Ascending aorta (tissue), 2 donors: ENCODE measurements at regions of chr7 and their contacts with region 1.

Region 1: GRCh38 chr7:150368096-150368883 is at the start of gene REPIN1:
- DNase-seq: peak; percentile 75 to 96
- H3K4me3 ChIP-seq: peak within 1 kb of the TSS; percentile 96 to 97
- H3K27ac ChIP-seq: peak within 1 kb of the TSS; percentile 90
- H3K4me1 ChIP-seq: peaks cover 8 to 11% of the 10 kb centered on the region in 2 donors
- H3K27me3 ChIP-seq: no peaks in the 10 kb centered on the region
- CTCF ChIP-seq: no peak
- total RNA-seq, gene REPIN1: 123 TPM

Region 2: GRCh38 chr7:149624419-149625339 is 743.6 kb before region 1 on chr7:
- intact Hi-C with region 1: loop called (anchors 5 kb)
- DNase-seq: peak; percentile 77 to 97
- H3K4me3 ChIP-seq: peak overlapping the region; percentile 91 to 98
- H3K27ac ChIP-seq: peak overlapping the region; percentile 84 to 90
- H3K4me1 ChIP-seq: peaks cover 0 to 7% of the 10 kb centered on the region in 2 donors
- H3K27me3 ChIP-seq: no peaks in the 10 kb centered on the region
- CTCF ChIP-seq: peak; percentile 92 to 98 (median 93)

Region 3: DNA sequence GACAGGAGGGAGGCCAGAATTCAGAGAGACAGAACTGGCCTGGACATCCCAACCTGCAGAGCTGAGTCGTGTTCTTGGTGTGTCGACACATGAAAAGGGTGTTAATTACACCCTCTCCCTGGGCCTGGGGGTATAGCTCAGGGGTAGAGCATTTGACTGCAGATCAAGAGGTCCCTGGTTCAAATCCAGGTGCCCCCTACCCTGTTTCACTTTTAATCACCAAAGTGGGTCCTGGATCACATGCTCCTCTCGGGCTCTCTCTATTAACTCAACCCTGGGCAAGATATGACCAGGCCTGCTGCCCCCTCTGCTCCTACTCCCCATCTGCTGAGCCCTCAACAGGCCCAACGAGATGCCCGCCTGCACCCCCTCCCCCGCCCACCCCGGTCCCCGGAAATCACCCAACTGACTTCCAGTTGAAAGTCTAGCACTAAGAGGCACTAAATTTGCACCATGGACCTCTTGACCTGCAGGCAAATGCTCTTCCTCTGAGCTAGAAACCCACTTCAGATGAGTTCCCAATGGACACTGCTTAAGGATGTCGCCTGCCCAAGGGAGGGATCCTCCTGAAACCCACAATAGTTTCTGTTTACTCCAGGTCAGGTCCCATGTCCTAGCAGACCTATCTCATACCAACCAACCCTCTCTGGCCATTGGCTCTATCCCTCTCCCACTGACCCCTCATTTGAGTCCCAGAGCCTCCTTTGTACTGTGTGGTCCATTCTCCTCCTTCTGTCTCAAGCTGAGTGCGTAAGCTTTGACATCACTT is 732.5 kb before region 1 on chr7:
- intact Hi-C with region 1: no loop called
- DNase-seq: no peak
- H3K4me3 ChIP-seq: no peak overlapping the region
- H3K27ac ChIP-seq: no peak overlapping the region
- H3K4me1 ChIP-seq: no peaks in the 10 kb centered on the region
- H3K27me3 ChIP-seq: no peaks in the 10 kb centered on the region
- CTCF ChIP-seq: no peak

Region 4: GRCh38 chr7:150340024-150340749 is 28.1 kb before region 1 on chr7:
- intact Hi-C with region 1: loop called (anchors 2 kb)
- DNase-seq: peak in 1 of 2 donors; percentile 63
- H3K4me3 ChIP-seq: peak overlapping the region; percentile 51 to 68
- H3K27ac ChIP-seq: peak overlapping the region; percentile 54 to 63
- H3K4me1 ChIP-seq: peaks cover 7% of the 10 kb centered on the region in 2 donors
- H3K27me3 ChIP-seq: no peaks in the 10 kb centered on the region
- CTCF ChIP-seq: no peak

Region 5: DNA sequence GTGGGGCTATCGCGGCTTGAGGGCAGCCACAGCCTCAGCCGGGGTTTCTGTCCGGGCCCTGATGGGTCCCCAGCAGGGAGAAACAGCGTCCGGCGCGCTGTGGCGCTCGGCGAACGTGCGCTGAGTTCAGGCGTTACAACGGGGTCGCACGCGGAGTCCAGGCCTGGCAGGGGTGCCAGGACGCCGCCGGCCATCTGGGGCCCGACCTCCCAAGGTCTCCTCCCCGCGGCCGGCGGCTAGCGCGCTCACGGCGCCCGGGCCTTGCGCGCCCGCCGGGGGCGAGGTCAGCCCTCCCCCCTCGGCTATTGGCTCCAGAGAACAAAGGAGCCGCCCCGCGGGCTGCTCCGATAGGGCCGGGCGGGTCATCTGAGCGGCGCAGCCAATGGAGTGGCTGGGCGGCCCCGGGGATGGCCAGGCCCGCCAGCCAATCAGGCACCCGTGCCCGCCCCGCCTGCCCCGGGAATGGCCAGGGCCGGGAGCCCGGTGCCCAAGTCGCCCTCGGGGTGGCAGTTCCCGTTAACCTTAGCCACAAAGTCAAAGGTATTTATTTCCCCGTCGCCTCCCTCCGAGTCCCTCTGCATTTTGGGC is 10.7 kb after region 1 on chr7 and contains the start of gene ZNF775:
- intact Hi-C with region 1: loop called (anchors 1 kb)
- DNase-seq: peak; percentile 88 to 98
- H3K4me3 ChIP-seq: peak within 1 kb of the TSS; percentile 61 to 93
- H3K27ac ChIP-seq: peak within 1 kb of the TSS; percentile 79 to 85
- H3K4me1 ChIP-seq: peaks cover 0 to 6% of the 10 kb centered on the region in 2 donors
- H3K27me3 ChIP-seq: no peaks in the 10 kb centered on the region
- CTCF ChIP-seq: no peak
- total RNA-seq, gene ZNF775: 17.1 TPM

Region 6: GRCh38 chr7:150417863-150418262 is 49.6 kb after region 1 on chr7:
- intact Hi-C with region 1: no loop called
- DNase-seq: no peak
- H3K4me3 ChIP-seq: no peak overlapping the region
- H3K27ac ChIP-seq: no peak overlapping the region
- H3K4me1 ChIP-seq: no peaks in the 10 kb centered on the region
- H3K27me3 ChIP-seq: no peaks in the 10 kb centered on the region
- CTCF ChIP-seq: no peak